ENCODE measurements at regions of chr17 and their contacts with region 1.

Region 1: GRCh38 chr17:50200457-50201275 is 765 bp downstream of the COL1A1 start:
- DNase-seq: peak; percentile 88
- ATAC-seq: peak; percentile 72
- H3K4me3 ChIP-seq: peak overlapping the region; percentile 71 to 75
- H3K27ac ChIP-seq: peak overlapping the region; percentile 45; the same call in 1 of the 2 replicates
- H3K4me1 ChIP-seq: peaks cover 10 to 39% of the 10 kb centered on the region in 2 experiments
- H3K27me3 ChIP-seq: no peaks in the 10 kb centered on the region
- CTCF ChIP-seq: peak; percentile 99 to 100 (median 100)
- POLR2A ChIP-seq: no peak
- RAD21 ChIP-seq: peak; percentile 100

Region 2: GRCh38 chr17:50114849-50115357 is 85.8 kb before region 1 on chr17:
- CTCF ChIA-PET with region 1: interaction called, 12 read pairs
- POLR2A ChIA-PET with region 1: no interaction called
- RAD21 ChIA-PET with region 1: no interaction called
- intact Hi-C with region 1: no loop called
- DNase-seq: peak; percentile 66
- ATAC-seq: peak; percentile 51
- H3K4me3 ChIP-seq: no peak overlapping the region
- H3K27ac ChIP-seq: no peak overlapping the region
- H3K4me1 ChIP-seq: peaks cover 7 to 22% of the 10 kb centered on the region in 2 experiments; a peak in 3 of 4 replicates
- H3K27me3 ChIP-seq: peaks cover 6% of the 10 kb centered on the region; the same call in 1 of the 2 replicates
- CTCF ChIP-seq: peak; percentile 88 to 98 (median 92)
- POLR2A ChIP-seq: no peak
- RAD21 ChIP-seq: no peak; the same call in 1 of the 2 replicates

Region 3: GRCh38 chr17:50129728-50130558 is 70.7 kb before region 1 on chr17 and contains the start of gene SAMD14:
- CTCF ChIA-PET with region 1: no interaction called
- POLR2A ChIA-PET with region 1: no interaction called
- RAD21 ChIA-PET with region 1: no interaction called
- intact Hi-C with region 1: no loop called
- DNase-seq: no peak
- ATAC-seq: no peak
- H3K4me3 ChIP-seq: no peak within 1 kb of the TSS
- H3K27ac ChIP-seq: no peak within 1 kb of the TSS
- H3K4me1 ChIP-seq: peaks cover 16 to 32% of the 10 kb centered on the region in 2 experiments
- H3K27me3 ChIP-seq: no peaks in the 10 kb centered on the region
- CTCF ChIP-seq: no peak
- POLR2A ChIP-seq: no peak
- RAD21 ChIP-seq: no peak
- total RNA-seq, gene SAMD14: 1.5 TPM

Region 4: DNA sequence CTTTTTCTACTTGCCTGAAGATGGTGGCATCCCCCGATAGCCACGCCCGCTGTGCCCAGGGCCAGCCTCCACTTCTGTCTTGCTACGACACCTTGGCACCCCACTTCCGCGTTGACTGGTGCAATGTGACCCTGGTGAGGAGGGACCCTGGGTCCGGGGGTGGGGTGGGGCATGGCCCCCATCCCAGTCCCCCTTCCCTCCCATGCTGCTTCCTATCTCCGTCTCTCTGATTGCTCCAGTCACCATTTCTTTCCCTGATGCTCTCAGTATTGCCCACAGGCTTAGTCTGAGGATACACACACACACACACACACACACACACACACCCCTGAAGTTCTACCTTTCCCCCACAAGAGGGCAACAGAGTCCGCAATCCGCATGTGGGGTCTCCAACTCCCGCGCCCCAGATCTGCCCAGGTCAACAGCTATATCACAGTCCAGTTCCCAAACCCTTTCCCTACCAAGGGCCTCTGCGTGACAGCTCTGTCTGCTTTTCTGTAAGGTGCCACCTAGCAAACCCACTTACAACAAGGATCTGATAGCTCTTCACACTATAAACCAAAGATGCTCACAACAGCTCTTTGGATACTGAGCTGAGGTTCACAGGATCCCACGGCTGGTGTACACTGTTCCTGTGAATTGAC is 31.4 kb before region 1 on chr17:
- CTCF ChIA-PET with region 1: interaction called, 59 read pairs
- POLR2A ChIA-PET with region 1: interaction called, 5 read pairs
- RAD21 ChIA-PET with region 1: interaction called, 13 to 26 read pairs
- intact Hi-C with region 1: loop called (anchors 1 kb)
- DNase-seq: peak; percentile 78
- ATAC-seq: peak; percentile 77
- H3K4me3 ChIP-seq: peak overlapping the region; percentile 19 to 27; a peak in 3 of 4 replicates
- H3K27ac ChIP-seq: no peak overlapping the region
- H3K4me1 ChIP-seq: peaks cover 9 to 46% of the 10 kb centered on the region in 2 experiments
- H3K27me3 ChIP-seq: no peaks in the 10 kb centered on the region
- CTCF ChIP-seq: peak; percentile 97 to 100 (median 98)
- POLR2A ChIP-seq: no peak
- RAD21 ChIP-seq: peak; percentile 99

Region 5: GRCh38 chr17:50213026-50214022 is 12.7 kb after region 1 on chr17:
- CTCF ChIA-PET with region 1: interaction called, 46 read pairs
- POLR2A ChIA-PET with region 1: interaction called, 3 read pairs
- RAD21 ChIA-PET with region 1: interaction called in 1 of 2 experiments, 10 read pairs
- intact Hi-C with region 1: no loop called
- DNase-seq: no peak
- ATAC-seq: peak; percentile 68
- H3K4me3 ChIP-seq: no peak overlapping the region
- H3K27ac ChIP-seq: no peak overlapping the region
- H3K4me1 ChIP-seq: peaks cover 19 to 36% of the 10 kb centered on the region in 2 experiments
- H3K27me3 ChIP-seq: no peaks in the 10 kb centered on the region
- CTCF ChIP-seq: peak in 2 of 3 experiments; percentile 29 to 38; a peak in 3 of 6 replicates
- POLR2A ChIP-seq: no peak
- RAD21 ChIP-seq: no peak

Region 6: GRCh38 chr17:50279181-50279526 is 78.5 kb after region 1 on chr17:
- CTCF ChIA-PET with region 1: interaction called, 152 read pairs
- POLR2A ChIA-PET with region 1: interaction called, 3 read pairs
- RAD21 ChIA-PET with region 1: interaction called, 8 to 16 read pairs
- intact Hi-C with region 1: no loop called
- DNase-seq: no peak
- ATAC-seq: peak; percentile 49
- H3K4me3 ChIP-seq: no peak overlapping the region
- H3K27ac ChIP-seq: peak overlapping the region; percentile 25; the same call in 1 of the 2 replicates
- H3K4me1 ChIP-seq: peaks cover 28 to 52% of the 10 kb centered on the region in 2 experiments
- H3K27me3 ChIP-seq: no peaks in the 10 kb centered on the region
- CTCF ChIP-seq: no peak
- POLR2A ChIP-seq: no peak
- RAD21 ChIP-seq: no peak

Region 7: GRCh38 chr17:50297407-50297865 is 96.8 kb after region 1 on chr17:
- CTCF ChIA-PET with region 1: interaction called, 243 read pairs
- POLR2A ChIA-PET with region 1: interaction called, 21 read pairs
- RAD21 ChIA-PET with region 1: interaction called, 11 to 28 read pairs
- intact Hi-C with region 1: loop called (anchors 1 kb)
- DNase-seq: peak; percentile 80
- ATAC-seq: peak; percentile 99
- H3K4me3 ChIP-seq: no peak overlapping the region
- H3K27ac ChIP-seq: no peak overlapping the region
- H3K4me1 ChIP-seq: no peaks in the 10 kb centered on the region
- H3K27me3 ChIP-seq: no peaks in the 10 kb centered on the region
- CTCF ChIP-seq: peak; percentile 74 to 99 (median 98)
- POLR2A ChIP-seq: no peak
- RAD21 ChIP-seq: peak; percentile 100